Activated CD4-positive, alpha-beta T cell treated with anti-CD3 and anti-CD28 coated beads for 36 hours (primary cell): ENCODE measurements at regions of chr9 and their contacts with region 1.

Region 1: GRCh38 chr9:1837449-1838084 is 177.6 kb upstream of the SMARCA2 start:
- DNase-seq: peak; percentile 28
- ATAC-seq: no peak
- H3K4me3 Mint-ChIP-seq: no peak overlapping the region
- H3K27ac Mint-ChIP-seq: no peak overlapping the region
- H3K4me1 Mint-ChIP-seq: no peaks in the 10 kb centered on the region
- H3K27me3 Mint-ChIP-seq: peaks cover 5% of the 10 kb centered on the region

Region 2: DNA sequence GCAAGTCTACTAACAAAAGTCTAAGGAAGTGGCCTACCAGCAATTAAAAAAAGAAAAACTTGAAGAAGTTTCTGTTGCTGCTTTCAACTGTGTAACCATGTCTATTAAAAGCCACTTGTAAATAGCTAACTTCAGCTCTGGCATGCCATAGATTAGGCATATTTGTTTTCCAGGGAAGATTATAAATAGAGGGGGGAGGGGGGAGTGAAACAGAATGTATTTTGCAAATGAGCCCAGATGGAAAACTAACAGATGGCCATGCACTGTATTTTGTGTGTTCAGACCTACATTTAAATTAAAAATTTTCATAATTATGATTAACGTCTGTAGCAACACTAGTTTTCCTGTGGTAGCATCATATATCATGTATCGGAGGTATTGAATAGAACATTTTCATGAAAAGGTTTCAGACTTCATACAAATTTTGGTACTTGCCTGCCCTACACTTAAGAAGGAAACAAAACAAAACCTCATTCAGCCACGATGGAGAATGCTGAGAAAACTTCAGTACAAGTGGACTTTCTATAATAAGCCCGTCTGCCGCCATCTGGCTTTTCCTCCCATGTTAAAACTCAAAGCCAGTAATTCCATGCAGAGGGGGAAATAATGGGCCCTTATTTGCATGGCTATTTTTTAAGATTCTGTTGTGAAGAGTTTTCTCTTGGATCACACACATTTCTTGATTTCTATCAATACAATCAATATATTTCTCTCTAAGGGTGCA is 42.9 kb before region 1 on chr9:
- CTCF ChIA-PET with region 1: interaction called, 4 read pairs
- POLR2A ChIA-PET with region 1: no interaction called
- intact Hi-C with region 1: loop called in 1 of 2 experiments (anchors 5 kb)
- DNase-seq: no peak
- ATAC-seq: no peak
- H3K4me3 Mint-ChIP-seq: no peak overlapping the region
- H3K27ac Mint-ChIP-seq: no peak overlapping the region
- H3K4me1 Mint-ChIP-seq: no peaks in the 10 kb centered on the region
- H3K27me3 Mint-ChIP-seq: peaks cover 5% of the 10 kb centered on the region

Region 3: DNA sequence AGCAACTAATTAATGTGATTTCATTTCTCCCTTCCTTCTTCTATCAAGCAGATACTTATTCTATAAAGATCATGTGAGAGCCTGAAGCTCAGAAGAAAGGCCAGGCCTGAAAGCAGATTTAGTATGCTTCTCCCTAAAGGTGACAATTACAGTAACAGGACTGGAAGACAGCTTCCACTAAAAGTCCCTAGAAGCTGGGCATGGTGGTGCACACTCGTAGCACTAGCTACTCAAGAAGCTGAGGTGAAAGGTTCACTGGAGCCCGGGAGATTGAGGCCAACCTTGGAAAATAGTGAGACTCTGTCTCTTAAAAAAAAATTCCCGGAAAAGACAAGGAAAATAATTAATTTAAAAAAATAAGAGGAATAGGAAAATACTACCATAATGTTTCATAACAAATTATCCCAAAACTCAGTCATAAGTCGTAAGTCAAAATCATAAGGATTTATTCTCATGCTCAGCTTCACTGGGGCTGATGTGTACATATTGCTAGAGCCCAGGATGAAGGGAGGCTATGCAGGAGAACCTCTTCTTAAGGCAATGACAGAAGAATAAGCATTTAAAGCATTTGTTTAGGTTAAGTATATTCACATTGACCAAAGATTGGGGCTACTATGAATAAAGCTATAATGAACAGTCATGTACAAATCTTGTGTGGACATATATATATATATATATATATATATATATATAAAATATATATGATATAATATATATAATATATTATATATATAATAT is 33.3 kb before region 1 on chr9:
- CTCF ChIA-PET with region 1: interaction called, 4 read pairs
- POLR2A ChIA-PET with region 1: no interaction called
- intact Hi-C with region 1: loop called in 1 of 2 experiments (anchors 1 kb)
- DNase-seq: no peak
- ATAC-seq: peak; percentile 75
- H3K4me3 Mint-ChIP-seq: no peak overlapping the region
- H3K27ac Mint-ChIP-seq: no peak overlapping the region
- H3K4me1 Mint-ChIP-seq: peaks cover 3% of the 10 kb centered on the region
- H3K27me3 Mint-ChIP-seq: no peaks in the 10 kb centered on the region